PC-9 (cell line): ENCODE measurements at regions of chrX and their contacts with region 1.

Region 1: DNA sequence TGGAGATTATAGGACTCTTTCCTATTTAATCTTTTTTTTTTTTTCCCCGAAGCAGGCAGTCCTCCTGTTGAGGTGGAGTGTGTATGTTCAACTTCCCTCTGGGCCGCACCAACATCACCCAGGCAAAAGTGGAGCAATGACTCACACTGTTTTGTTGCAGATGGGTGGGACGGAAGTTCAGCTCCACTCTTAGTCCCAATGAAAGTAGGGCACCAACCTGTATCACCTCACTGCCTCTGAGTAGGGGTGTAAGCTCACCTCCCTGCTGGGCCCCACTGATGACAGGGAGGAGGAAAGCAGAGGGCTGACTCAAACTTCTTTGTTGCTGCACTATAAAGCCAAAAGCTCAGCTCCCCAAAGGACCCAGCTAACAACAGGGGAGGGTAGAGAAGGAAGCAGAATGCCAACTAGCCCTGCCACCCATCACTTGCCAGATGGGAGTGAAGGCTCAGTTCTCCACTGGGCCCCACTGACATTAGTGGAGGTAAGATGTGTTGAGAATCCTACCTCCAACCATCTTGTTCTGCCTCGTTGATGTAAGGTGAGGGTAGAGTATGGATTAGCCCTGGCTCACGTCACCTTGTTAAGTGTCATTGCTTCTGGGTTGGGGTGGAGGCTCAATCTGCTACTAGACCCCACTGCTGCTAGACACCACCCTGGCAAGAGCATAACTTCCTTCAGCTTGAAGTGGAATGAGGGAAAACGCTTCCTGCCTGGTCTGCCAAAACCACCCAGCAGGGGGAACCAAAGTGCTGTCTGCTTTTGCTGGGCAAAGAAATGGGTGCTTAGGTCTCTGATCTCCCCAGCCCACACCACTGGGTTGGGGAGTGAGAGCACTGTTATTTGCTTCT is 14.1 kb downstream of the RPS6KA3 start:
- DNase-seq: peak in 1 of 2 experiments; percentile 58
- H3K4me3 ChIP-seq: no peak overlapping the region
- H3K27ac ChIP-seq: no peak overlapping the region
- H3K4me1 ChIP-seq: no peaks in the 10 kb centered on the region
- H3K27me3 ChIP-seq: no peaks in the 10 kb centered on the region
- CTCF ChIP-seq: peak; percentile 76

Region 2: GRCh38 chrX:20320461-20321159 is 68.0 kb after region 1 on chrX:
- CTCF ChIA-PET with region 1: no interaction called
- POLR2A ChIA-PET with region 1: interaction called, 10 read pairs
- intact Hi-C with region 1: no loop called
- DNase-seq: no peak
- H3K4me3 ChIP-seq: no peak overlapping the region
- H3K27ac ChIP-seq: no peak overlapping the region
- H3K4me1 ChIP-seq: no peaks in the 10 kb centered on the region
- H3K27me3 ChIP-seq: no peaks in the 10 kb centered on the region
- CTCF ChIP-seq: no peak

Region 3: GRCh38 chrX:20382518-20383297 is 130.1 kb after region 1 on chrX:
- CTCF ChIA-PET with region 1: no interaction called
- POLR2A ChIA-PET with region 1: interaction called, 14 read pairs
- intact Hi-C with region 1: no loop called
- DNase-seq: peak in 1 of 2 experiments; percentile 56
- H3K4me3 ChIP-seq: no peak overlapping the region
- H3K27ac ChIP-seq: no peak overlapping the region
- H3K4me1 ChIP-seq: peaks cover 23% of the 10 kb centered on the region
- H3K27me3 ChIP-seq: no peaks in the 10 kb centered on the region
- CTCF ChIP-seq: no peak

Region 4: DNA sequence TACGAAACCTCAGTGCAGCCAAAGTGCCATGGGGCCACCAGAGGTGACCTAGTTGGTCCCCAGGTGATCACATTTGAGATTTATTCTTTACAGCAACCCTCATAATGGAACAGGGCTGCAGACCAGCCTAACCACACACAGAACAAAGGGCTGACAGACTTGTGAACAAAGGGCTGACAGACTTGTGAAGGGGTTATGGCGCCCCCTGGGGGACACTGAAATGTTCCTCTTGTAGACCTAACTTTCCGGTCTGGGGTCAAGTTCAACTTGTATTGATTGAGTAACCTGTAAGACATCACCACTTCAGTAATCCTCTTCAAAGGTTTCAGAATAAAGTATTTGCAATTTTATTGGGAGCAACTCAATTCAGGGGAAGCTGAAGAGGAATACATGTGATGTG is 190.0 kb after region 1 on chrX:
- CTCF ChIA-PET with region 1: no interaction called
- POLR2A ChIA-PET with region 1: no interaction called
- intact Hi-C with region 1: loop called (anchors 1 kb)
- DNase-seq: peak; percentile 60 to 74
- H3K4me3 ChIP-seq: no peak overlapping the region
- H3K27ac ChIP-seq: no peak overlapping the region
- H3K4me1 ChIP-seq: peaks cover 7% of the 10 kb centered on the region; the same call in 1 of the 2 replicates
- H3K27me3 ChIP-seq: no peaks in the 10 kb centered on the region
- CTCF ChIP-seq: peak; percentile 79

Region 5: GRCh38 chrX:20530406-20530921 is 277.9 kb after region 1 on chrX:
- CTCF ChIA-PET with region 1: no interaction called
- POLR2A ChIA-PET with region 1: no interaction called
- intact Hi-C with region 1: loop called (anchors 5 kb)
- DNase-seq: peak; percentile 47 to 52
- H3K4me3 ChIP-seq: peak overlapping the region; percentile 46; the same call in 1 of the 2 replicates
- H3K27ac ChIP-seq: no peak overlapping the region
- H3K4me1 ChIP-seq: peaks cover 15% of the 10 kb centered on the region
- H3K27me3 ChIP-seq: no peaks in the 10 kb centered on the region
- CTCF ChIP-seq: peak; percentile 85